Calu3 (cell line): ENCODE measurements at regions of chr10 and their contacts with region 1.

Region 1: GRCh38 chr10:52951824-52952223 is 179.2 kb upstream of the MBL2 start:
- DNase-seq: peak; percentile 70
- H3K4me3 Mint-ChIP-seq: no peak overlapping the region
- H3K27ac Mint-ChIP-seq: no peak overlapping the region
- H3K4me1 Mint-ChIP-seq: no peaks in the 10 kb centered on the region
- H3K27me3 Mint-ChIP-seq: no peaks in the 10 kb centered on the region
- CTCF ChIP-seq: peak; percentile 44

Region 2: GRCh38 chr10:52818019-52818418 is 133.8 kb before region 1 on chr10:
- CTCF ChIA-PET with region 1: interaction called, 4 read pairs
- intact Hi-C with region 1: loop called (anchors 5 kb)
- DNase-seq: peak; percentile 30
- H3K4me3 Mint-ChIP-seq: no peak overlapping the region
- H3K27ac Mint-ChIP-seq: no peak overlapping the region
- H3K4me1 Mint-ChIP-seq: no peaks in the 10 kb centered on the region
- H3K27me3 Mint-ChIP-seq: no peaks in the 10 kb centered on the region
- CTCF ChIP-seq: peak; percentile 29

Region 3: GRCh38 chr10:52923520-52923919 is 28.3 kb before region 1 on chr10:
- CTCF ChIA-PET with region 1: no interaction called
- intact Hi-C with region 1: no loop called
- DNase-seq: no peak
- H3K4me3 Mint-ChIP-seq: no peak overlapping the region
- H3K27ac Mint-ChIP-seq: no peak overlapping the region
- H3K4me1 Mint-ChIP-seq: no peaks in the 10 kb centered on the region
- H3K27me3 Mint-ChIP-seq: no peaks in the 10 kb centered on the region
- CTCF ChIP-seq: no peak

Region 4: DNA sequence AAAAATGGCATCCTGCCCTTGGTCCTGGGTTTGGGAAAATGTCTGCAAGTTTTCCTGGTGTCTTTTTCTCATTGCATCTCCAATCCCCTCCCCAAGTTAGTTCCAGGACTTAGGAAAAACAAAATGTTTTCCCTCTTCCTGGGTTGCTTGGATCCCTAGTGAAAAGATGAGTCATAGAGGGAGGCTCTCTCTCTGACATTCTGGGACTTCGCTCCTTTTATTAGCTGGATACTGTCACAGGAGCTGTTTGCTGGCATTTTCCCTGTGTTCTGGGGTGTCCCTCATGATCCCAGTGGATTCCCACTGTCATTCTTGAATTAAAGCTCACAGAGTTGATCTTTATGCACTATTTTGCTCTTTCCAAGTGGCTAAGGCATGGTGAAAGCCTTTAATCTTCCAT is 137.1 kb after region 1 on chr10:
- CTCF ChIA-PET with region 1: no interaction called
- intact Hi-C with region 1: no loop called
- DNase-seq: no peak
- H3K4me3 Mint-ChIP-seq: no peak overlapping the region
- H3K27ac Mint-ChIP-seq: no peak overlapping the region
- H3K4me1 Mint-ChIP-seq: no peaks in the 10 kb centered on the region
- H3K27me3 Mint-ChIP-seq: no peaks in the 10 kb centered on the region
- CTCF ChIP-seq: no peak

Region 5: GRCh38 chr10:53314876-53315275 is 363.1 kb after region 1 on chr10:
- CTCF ChIA-PET with region 1: no interaction called
- intact Hi-C with region 1: loop called (anchors 5 kb)
- DNase-seq: peak; percentile 48
- H3K4me3 Mint-ChIP-seq: no peak overlapping the region
- H3K27ac Mint-ChIP-seq: no peak overlapping the region
- H3K4me1 Mint-ChIP-seq: no peaks in the 10 kb centered on the region
- H3K27me3 Mint-ChIP-seq: no peaks in the 10 kb centered on the region
- CTCF ChIP-seq: no peak

Region 6: GRCh38 chr10:53458007-53458406 is 506.2 kb after region 1 on chr10:
- CTCF ChIA-PET with region 1: no interaction called
- intact Hi-C with region 1: no loop called
- DNase-seq: no peak
- H3K4me3 Mint-ChIP-seq: no peak overlapping the region
- H3K27ac Mint-ChIP-seq: no peak overlapping the region
- H3K4me1 Mint-ChIP-seq: no peaks in the 10 kb centered on the region
- H3K27me3 Mint-ChIP-seq: no peaks in the 10 kb centered on the region
- CTCF ChIP-seq: no peak